ENCODE measurements at regions of chr5 and their contacts with region 1.

Region 1: DNA sequence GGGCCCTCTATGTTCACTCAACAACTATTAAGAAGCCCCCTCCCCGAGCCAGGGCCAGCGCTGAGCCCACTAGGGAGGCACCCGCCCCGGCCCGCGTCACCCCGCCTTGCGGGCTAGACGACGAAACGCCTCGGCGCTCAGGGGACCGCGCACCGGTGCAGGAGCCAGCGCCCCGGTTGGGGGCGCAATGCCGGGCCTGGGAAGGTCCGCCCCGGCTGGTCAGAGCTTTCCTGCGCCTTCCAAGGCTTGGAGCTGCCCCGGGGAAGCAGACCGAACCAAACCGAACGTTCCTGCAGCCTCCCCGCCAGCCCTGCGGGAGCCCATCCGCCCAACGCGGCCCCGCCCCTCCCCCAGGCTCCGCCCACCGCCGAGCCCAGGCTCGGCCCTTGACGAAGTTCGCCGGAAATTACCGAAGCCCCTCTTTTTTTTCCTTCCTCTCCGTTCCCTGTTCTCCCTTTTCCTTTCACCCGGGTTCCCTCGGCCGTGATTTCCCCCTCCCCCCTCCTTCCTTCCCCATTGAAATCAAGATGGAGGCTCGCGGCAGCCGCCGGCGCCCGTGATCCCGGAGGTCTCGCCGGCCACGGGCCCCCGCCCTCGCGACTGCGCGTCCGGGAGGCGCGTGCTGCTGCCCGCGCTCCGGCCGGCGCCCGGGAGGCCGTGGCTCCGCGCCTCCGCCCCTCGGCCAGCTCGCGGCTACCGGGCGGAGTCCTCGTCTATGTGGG is at the start of gene TRIO:
- DNase-seq: peak; percentile 66 to 94
- H3K4me3 ChIP-seq: peak within 1 kb of the TSS; percentile 92 to 97
- H3K27ac ChIP-seq: peak within 1 kb of the TSS; percentile 93 to 98
- H3K4me1 ChIP-seq: peaks cover 0 to 29% of the 10 kb centered on the region in 2 donors
- H3K27me3 ChIP-seq: no peaks in the 10 kb centered on the region
- CTCF ChIP-seq: peak; percentile 23 to 68 (median 67)
- total RNA-seq, gene TRIO: 262 TPM

Region 2: GRCh38 chr5:14011089-14012004 is 131.6 kb before region 1 on chr5:
- intact Hi-C with region 1: no loop called
- DNase-seq: peak; percentile 43 to 90
- H3K4me3 ChIP-seq: peak overlapping the region; percentile 51 to 65
- H3K27ac ChIP-seq: peak overlapping the region; percentile 9 to 13
- H3K4me1 ChIP-seq: peaks cover 4 to 5% of the 10 kb centered on the region in 2 donors
- H3K27me3 ChIP-seq: no peaks in the 10 kb centered on the region
- CTCF ChIP-seq: no peak

Region 3: DNA sequence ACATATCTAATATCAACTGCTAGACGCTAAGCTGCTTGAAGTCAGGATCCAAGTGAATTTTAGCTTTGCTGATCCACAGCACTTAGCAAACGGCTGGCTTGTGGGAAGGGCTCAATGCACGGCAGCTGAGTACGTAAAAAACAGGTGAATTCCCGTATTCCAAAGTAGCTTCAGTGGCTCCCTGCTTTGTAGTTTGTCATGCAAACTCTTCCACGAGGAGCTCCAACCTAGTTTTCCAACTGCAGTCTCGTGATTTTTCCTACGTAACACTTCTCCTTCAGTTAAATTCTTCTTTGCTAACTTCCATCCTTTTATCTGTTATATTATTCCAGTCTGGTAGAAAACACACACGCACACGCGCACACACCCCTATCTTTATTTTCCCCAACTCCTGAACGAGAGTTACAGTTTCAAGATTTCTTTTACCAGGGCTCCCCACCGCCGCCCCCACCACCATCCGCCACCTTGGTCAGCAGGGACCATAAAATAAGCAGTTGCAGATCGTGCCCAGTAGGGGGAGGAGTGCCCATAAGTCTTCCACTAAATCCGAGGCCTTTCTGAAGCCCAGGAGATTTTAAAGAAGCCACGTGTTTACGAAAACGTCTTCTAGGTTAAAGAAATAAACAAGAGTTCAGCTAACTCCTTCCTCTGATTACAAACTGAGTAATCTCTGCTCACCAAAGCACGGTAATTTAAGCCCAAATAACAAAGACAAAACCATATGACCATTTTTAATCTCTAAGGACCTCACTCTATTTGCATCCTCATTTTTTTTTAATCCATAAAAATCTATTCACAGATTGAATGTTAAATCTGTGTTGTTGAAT is 34.6 kb before region 1 on chr5:
- intact Hi-C with region 1: loop called (anchors 2 kb)
- DNase-seq: peak in 1 of 2 donors; percentile 77
- H3K4me3 ChIP-seq: peak overlapping the region; percentile 0 to 50
- H3K27ac ChIP-seq: peak overlapping the region; percentile 19 to 27
- H3K4me1 ChIP-seq: peaks cover 2% of the 10 kb centered on the region in 2 donors
- H3K27me3 ChIP-seq: no peaks in the 10 kb centered on the region
- CTCF ChIP-seq: peak; percentile 40 to 83 (median 79)

Region 4: DNA sequence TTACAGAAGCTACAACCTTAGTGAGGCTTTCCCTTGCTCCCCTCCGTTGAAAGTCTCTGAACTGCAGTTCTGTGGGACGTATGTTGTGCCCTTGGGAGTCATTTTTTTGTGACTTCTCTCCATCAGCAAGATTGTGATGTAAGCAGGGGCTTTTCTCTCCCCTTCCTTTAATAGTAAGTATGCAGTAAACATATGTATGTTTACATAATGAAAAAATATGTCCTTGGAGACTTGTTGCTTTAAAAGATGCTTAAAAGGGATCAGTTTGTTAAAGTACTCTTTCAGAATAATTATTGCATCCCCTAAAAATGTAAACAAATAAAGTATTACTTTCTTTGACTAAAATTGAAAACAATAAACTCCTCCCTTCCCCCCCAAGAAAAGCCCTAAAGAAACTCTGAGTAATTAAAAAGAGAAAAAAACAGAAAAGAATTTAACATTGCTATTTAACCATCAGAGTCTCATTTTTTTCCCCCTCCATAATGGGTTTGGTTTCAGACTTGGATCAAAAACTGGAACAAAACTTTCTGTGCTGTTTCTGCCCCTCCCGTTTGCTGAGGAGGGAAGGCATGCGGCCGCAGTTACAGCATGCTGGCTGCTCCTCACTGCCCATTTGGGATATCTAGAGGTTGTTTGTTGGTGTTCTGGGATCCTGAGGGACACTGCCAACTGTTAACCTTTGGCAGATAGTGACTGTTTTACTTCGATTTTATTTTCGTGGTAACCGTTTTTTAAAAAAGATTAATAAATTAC is 40.4 kb after region 1 on chr5:
- intact Hi-C with region 1: loop called (anchors 1 kb)
- DNase-seq: no peak
- H3K4me3 ChIP-seq: peak overlapping the region; percentile 13 to 52
- H3K27ac ChIP-seq: peak overlapping the region; percentile 95 to 99
- H3K4me1 ChIP-seq: peaks cover 27 to 81% of the 10 kb centered on the region in 2 donors
- H3K27me3 ChIP-seq: no peaks in the 10 kb centered on the region
- CTCF ChIP-seq: no peak

Region 5: GRCh38 chr5:14447958-14448911 is 305.2 kb after region 1 on chr5:
- intact Hi-C with region 1: loop called (anchors 10 kb)
- DNase-seq: no peak
- H3K4me3 ChIP-seq: no peak overlapping the region
- H3K27ac ChIP-seq: peak overlapping the region; percentile 74 to 77
- H3K4me1 ChIP-seq: peaks cover 0 to 22% of the 10 kb centered on the region in 2 donors
- H3K27me3 ChIP-seq: no peaks in the 10 kb centered on the region
- CTCF ChIP-seq: no peak

Measured in ascending aorta (tissue), 2 donors.